Lower leg skin (tissue), 4 donors: ENCODE measurements at regions of chr2 and their contacts with region 1.

Region 1: GRCh38 chr2:26964446-26965130 is 5.8 kb upstream of the MAPRE3 start:
- DNase-seq: peak in 1 of 2 donors; percentile 9
- H3K4me3 ChIP-seq: no peak overlapping the region
- CTCF ChIP-seq: no peak
- POLR2A ChIP-seq: no peak

Region 2: DNA sequence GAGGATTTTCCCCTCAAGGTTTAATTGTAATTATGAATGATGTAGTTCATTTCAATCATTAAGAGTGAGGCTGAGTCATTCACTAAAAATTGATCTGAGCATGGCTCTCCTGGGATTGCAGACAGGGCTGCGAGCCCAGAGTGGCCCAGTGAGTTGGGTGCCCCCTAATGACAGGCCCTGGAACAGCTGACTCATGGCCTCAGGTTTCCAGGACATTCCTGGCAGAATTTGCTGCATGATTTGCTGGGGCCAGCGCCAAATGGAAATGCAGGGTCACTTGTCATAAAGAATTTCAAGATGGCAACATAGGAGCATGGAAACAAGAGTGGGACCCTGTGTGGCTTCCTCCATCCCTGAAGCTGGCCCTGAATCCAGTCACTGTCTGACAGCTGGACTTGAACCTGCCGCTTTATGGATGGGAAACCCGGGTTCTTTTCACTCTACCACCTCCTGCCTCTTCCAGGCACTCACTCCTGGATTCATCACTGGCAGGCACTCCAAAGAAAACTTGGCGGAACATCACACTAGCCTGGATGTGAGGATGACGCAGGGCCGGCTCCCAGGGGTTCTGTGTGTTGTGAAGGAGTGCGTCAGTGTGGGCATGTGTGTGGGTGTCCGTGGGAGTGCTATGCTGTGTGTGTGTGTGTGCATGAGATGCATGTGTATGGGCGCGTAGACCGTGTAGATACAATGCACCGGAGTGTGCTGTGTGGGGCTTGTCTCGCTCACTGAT is 501.9 kb before region 1 on chr2:
- intact Hi-C with region 1: no loop called
- DNase-seq: no peak
- H3K4me3 ChIP-seq: no peak overlapping the region
- CTCF ChIP-seq: no peak
- POLR2A ChIP-seq: no peak

Region 3: GRCh38 chr2:26904839-26905238 is 59.7 kb before region 1 on chr2:
- intact Hi-C with region 1: no loop called
- DNase-seq: peak in 1 of 2 donors; percentile 20
- H3K4me3 ChIP-seq: no peak overlapping the region
- CTCF ChIP-seq: no peak
- POLR2A ChIP-seq: no peak

Region 4: GRCh38 chr2:27016801-27017325 is 52.3 kb after region 1 on chr2:
- intact Hi-C with region 1: loop called (anchors 5 kb)
- DNase-seq: peak in 1 of 2 donors; percentile 86
- H3K4me3 ChIP-seq: no peak overlapping the region
- CTCF ChIP-seq: no peak
- POLR2A ChIP-seq: no peak

Region 5: GRCh38 chr2:28155627-28156026 is 1191.0 kb after region 1 on chr2:
- intact Hi-C with region 1: no loop called
- DNase-seq: no peak
- H3K4me3 ChIP-seq: no peak overlapping the region
- CTCF ChIP-seq: no peak
- POLR2A ChIP-seq: no peak